ENCODE measurements at regions of chr19 and their contacts with region 1.

Region 1: DNA sequence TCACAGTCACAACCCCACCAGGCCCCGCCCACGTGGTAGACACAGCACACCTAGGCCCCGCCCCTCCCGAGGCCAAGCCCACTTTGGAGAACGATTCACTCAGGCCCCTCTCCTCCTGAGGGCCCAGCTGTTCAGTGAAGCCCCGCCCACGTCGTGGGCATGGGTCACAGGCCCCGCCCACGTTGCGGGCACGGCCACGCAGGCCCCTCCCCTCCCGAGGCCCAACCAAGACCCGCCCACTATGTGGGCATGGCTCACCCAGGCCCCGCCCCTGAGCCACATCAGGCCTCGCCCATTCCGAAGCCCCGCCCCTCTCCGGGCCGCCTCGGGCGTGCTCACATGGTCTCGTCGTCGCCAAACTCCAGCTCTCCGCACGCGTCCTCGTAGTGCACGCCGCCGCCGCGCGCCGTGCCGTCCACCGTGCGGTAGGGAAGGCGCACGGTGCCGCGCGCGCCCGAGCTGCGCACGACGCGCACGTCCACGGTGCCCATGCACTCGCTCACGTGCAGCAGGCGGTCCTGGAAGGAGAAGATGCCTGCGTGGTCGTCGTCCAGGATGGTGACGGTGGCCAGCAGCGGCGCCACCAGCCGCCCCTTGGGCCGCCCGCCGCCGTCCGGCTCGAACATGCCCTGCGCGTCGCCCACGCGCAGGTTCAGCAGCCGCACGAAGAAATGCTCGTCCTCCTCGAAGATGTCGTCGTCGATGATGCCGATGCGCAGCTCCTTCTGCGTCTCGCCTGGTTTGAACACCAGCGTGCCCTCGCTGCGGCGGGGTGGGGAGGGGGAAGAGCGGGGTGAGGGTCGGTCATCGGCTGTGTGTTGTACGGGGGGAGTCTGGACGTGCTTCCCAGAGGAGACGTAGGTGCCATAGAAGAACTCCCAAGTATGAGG is 24.0 kb downstream of the SLC8A2 start:
- DNase-seq: peak; percentile 70
- ATAC-seq: peak; percentile 64 to 80
- H3K4me3 ChIP-seq: no peak overlapping the region
- H3K27ac ChIP-seq: no peak overlapping the region
- H3K4me1 ChIP-seq: peaks cover 22% of the 10 kb centered on the region
- H3K27me3 ChIP-seq: peaks cover 69% of the 10 kb centered on the region
- CTCF ChIP-seq: no peak

Region 2: DNA sequence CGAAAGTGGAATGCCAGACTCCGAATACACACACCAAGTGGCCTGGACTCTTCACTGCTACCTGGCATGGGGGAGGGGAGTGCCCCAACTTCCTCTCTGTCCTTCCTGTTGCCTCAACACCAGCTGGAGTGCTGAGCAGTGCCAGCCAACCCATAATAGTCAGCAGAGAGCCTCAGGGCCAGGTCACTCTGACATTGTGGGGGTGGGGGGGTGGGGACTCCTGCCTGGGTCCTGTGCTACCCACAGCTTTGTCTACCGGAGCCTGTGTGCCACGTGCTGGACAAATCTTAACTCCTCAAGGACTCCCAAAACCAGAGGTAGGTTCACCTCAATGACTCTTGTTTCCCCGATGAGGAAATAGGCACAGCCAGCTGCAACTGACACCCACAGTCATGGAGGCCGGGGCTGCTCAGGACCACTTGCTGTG is 110.8 kb before region 1 on chr19:
- intact Hi-C with region 1: no loop called
- DNase-seq: peak; percentile 86
- ATAC-seq: peak; percentile 88 to 91
- H3K4me3 ChIP-seq: peak overlapping the region; percentile 24
- H3K27ac ChIP-seq: peak overlapping the region; percentile 44
- H3K4me1 ChIP-seq: no peaks in the 10 kb centered on the region
- H3K27me3 ChIP-seq: no peaks in the 10 kb centered on the region
- CTCF ChIP-seq: no peak

Region 3: DNA sequence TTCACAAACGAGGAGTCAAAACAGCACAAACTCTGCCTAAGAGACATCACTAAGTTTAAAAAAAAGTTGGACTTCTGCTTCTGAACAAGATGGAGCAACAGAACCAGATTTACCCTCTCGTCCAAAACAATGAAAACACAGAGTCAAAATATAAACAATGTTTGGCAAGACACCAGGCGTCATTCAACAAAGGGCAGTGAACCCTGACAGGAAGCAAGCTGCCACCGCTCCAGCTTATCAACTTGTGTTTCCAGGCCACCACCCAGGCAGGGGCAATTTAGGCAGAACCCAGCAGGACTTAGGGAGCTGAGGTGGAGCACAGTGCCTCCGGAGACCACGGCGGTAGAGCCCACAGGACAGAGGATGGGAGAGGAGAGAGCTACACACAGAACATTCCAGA is 75.8 kb after region 1 on chr19:
- intact Hi-C with region 1: no loop called
- DNase-seq: no peak
- ATAC-seq: no peak
- H3K4me3 ChIP-seq: no peak overlapping the region
- H3K27ac ChIP-seq: peak overlapping the region; percentile 21
- H3K4me1 ChIP-seq: no peaks in the 10 kb centered on the region
- H3K27me3 ChIP-seq: no peaks in the 10 kb centered on the region
- CTCF ChIP-seq: no peak

Region 4: GRCh38 chr19:47682939-47683338 is 235.2 kb after region 1 on chr19:
- intact Hi-C with region 1: loop called (anchors 10 kb)
- DNase-seq: no peak
- ATAC-seq: no peak
- H3K4me3 ChIP-seq: no peak overlapping the region
- H3K27ac ChIP-seq: no peak overlapping the region
- H3K4me1 ChIP-seq: no peaks in the 10 kb centered on the region
- H3K27me3 ChIP-seq: no peaks in the 10 kb centered on the region
- CTCF ChIP-seq: no peak

Measured in lower lobe of right lung (tissue), 2 donors.